ENCODE measurements at regions of chr1 and their contacts with region 1.

Region 1: GRCh38 chr1:87084244-87084836 is 169.9 kb downstream of the HS2ST1 start:
- DNase-seq: no peak
- ATAC-seq: peak; percentile 83
- H3K4me3 ChIP-seq: no peak overlapping the region
- H3K27ac ChIP-seq: no peak overlapping the region; the same call in 1 of the 2 replicates
- H3K4me1 ChIP-seq: peaks cover 3% of the 10 kb centered on the region; the same call in 1 of the 2 replicates
- H3K27me3 ChIP-seq: no peaks in the 10 kb centered on the region
- CTCF ChIP-seq: peak in 2 of 3 experiments; percentile 27 to 34; a peak in 2 of 6 replicates
- EP300 ChIP-seq: no peak
- POLR2A ChIP-seq: no peak
- RAD21 ChIP-seq: peak; percentile 66

Region 2: DNA sequence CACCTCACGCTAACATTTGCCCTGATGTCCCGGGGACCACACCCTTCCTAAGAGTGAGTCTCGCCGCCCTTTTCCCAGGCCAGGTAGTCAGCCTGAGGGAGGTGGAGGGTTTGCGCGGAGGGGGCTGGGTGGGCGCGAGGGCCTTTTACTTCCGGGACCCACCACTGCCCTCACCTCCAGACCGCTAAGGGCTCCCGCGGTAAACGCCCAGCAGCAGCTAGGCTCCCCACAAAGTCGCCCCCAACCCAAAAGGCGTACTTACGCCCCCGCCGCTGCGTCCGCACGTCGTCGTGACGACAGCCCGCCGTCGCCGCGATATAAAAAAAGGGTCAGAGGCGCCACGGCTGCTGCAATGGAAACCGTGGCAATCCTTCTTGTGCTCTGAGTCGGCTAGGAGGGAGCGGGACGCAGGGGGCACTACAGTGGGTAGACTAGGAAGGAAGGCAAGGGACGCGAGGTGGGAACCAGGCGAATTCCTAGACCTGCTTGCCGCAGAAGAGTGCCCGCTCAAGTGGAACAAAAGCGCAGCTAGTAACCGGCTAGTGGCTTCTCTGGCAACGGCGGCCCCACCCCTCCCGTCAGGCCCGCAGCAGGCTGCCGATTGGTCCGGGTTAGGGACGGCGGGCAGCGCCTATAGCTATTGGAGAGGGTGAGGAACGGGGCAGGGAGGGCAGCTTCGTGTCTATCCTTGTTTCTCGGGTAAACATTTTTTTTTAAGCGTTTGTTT is 688.4 kb before region 1 on chr1 and contains the start of gene ODF2L:
- CTCF ChIA-PET with region 1: no interaction called
- POLR2A ChIA-PET with region 1: no interaction called
- RAD21 ChIA-PET with region 1: no interaction called
- SMC1A ChIA-PET with region 1: no interaction called
- in situ Hi-C with region 1: loop called (anchors 25 kb)
- intact Hi-C with region 1: no loop called
- DNase-seq: peak; percentile 46
- ATAC-seq: peak; percentile 100
- H3K4me3 ChIP-seq: peak within 1 kb of the TSS; percentile 96
- H3K27ac ChIP-seq: peak within 1 kb of the TSS; percentile 54
- H3K4me1 ChIP-seq: no peaks in the 10 kb centered on the region
- H3K27me3 ChIP-seq: no peaks in the 10 kb centered on the region
- CTCF ChIP-seq: no peak
- EP300 ChIP-seq: no peak
- POLR2A ChIP-seq: peak; percentile 57; the same call in 1 of the 2 replicates
- RAD21 ChIP-seq: no peak
- polyA plus RNA-seq, gene ODF2L: 20.0 to 25.9 TPM

Region 3: GRCh38 chr1:86704458-86704971 is 379.8 kb before region 1 on chr1 and contains the start of gene SH3GLB1:
- CTCF ChIA-PET with region 1: interaction called, 20 read pairs
- POLR2A ChIA-PET with region 1: interaction called, 3 read pairs
- RAD21 ChIA-PET with region 1: interaction called, 12 read pairs
- SMC1A ChIA-PET with region 1: interaction called, 7 read pairs
- in situ Hi-C with region 1: no loop called
- intact Hi-C with region 1: loop called (anchors 10 kb)
- DNase-seq: peak; percentile 61
- ATAC-seq: peak; percentile 92
- H3K4me3 ChIP-seq: peak within 1 kb of the TSS; percentile 93
- H3K27ac ChIP-seq: peak within 1 kb of the TSS; percentile 94
- H3K4me1 ChIP-seq: no peaks in the 10 kb centered on the region
- H3K27me3 ChIP-seq: no peaks in the 10 kb centered on the region
- CTCF ChIP-seq: peak; percentile 83 to 90 (median 84)
- EP300 ChIP-seq: no peak; a peak in 1 of 4 replicates
- POLR2A ChIP-seq: peak; percentile 90
- RAD21 ChIP-seq: peak; percentile 49
- polyA plus RNA-seq, gene SH3GLB1: 19.8 to 20.2 TPM

Region 4: DNA sequence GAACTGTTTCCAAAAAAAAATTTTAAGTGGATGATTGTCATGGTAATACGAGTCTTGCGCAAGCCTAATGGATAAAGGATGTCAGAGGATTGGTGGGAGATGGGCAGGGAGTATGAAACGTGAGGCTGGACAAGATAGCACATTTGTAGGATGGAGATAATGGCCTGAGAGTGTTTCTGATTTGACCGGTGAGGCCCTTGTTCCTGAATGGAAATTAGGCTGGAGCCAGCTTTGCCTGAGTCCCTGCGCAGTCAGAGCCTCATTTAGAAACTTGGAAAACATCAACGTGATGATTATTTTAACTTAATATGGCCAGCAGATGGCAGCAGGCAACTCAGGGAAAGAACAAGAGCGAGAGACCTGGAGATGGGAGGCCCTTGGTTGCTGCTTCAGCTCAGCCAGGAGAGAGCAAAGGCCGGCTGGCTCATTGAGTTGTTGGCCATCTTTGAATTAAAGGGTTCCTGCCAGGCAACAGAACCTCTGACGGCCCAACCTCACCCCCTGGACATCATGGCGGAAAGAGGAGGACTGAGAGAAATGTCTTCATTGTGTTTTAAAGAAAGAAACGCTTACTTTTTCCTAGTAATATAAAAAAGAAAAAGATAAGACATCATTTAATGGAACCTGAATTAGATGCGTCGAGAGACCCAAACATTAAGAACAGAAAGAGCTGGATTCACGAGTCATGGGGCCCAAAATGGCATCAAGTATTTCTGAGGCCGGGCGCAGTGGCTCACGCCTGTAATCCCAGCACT is 250.7 kb before region 1 on chr1:
- CTCF ChIA-PET with region 1: interaction called, 198 read pairs
- POLR2A ChIA-PET with region 1: interaction called, 5 read pairs
- RAD21 ChIA-PET with region 1: interaction called, 76 read pairs
- SMC1A ChIA-PET with region 1: interaction called, 101 read pairs
- in situ Hi-C with region 1: loop called (anchors 5 kb)
- intact Hi-C with region 1: loop called (anchors 1 kb)
- DNase-seq: peak; percentile 41
- ATAC-seq: peak; percentile 96
- H3K4me3 ChIP-seq: no peak overlapping the region
- H3K27ac ChIP-seq: no peak overlapping the region
- H3K4me1 ChIP-seq: no peaks in the 10 kb centered on the region
- H3K27me3 ChIP-seq: no peaks in the 10 kb centered on the region
- CTCF ChIP-seq: peak; percentile 40 to 79 (median 49); a peak in 5 of 6 replicates
- EP300 ChIP-seq: no peak
- POLR2A ChIP-seq: no peak
- RAD21 ChIP-seq: peak; percentile 93

Region 5: DNA sequence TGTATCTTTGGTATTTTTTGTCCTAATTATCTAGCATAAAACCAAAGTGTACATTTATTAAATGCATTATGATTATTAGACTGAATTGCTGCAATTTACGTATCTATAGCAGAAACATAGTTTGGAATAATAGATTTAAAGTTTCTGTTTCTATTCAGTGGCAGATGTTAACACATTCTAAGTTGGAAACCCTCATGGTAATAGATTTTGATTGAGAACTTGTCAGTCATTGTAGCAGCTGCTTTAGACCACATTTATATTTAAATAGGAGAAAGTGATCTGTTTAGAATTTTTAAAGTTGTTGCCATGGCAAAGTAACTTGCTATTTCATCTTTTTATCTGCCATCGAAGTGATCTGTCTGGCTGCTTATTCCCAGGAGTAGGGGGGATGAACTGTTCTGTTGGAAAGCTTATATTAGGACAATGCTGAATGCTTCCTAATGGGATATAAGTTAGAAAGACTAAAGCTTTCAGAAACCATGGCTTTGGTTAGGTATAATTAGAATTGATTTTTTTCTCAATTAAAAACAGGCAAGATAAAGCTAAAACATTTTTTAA is 108.3 kb before region 1 on chr1:
- CTCF ChIA-PET with region 1: interaction called, 45 read pairs
- POLR2A ChIA-PET with region 1: no interaction called
- RAD21 ChIA-PET with region 1: interaction called, 9 read pairs
- SMC1A ChIA-PET with region 1: interaction called, 5 read pairs
- in situ Hi-C with region 1: no loop called
- intact Hi-C with region 1: no loop called
- DNase-seq: no peak
- ATAC-seq: no peak
- H3K4me3 ChIP-seq: no peak overlapping the region
- H3K27ac ChIP-seq: no peak overlapping the region
- H3K4me1 ChIP-seq: no peaks in the 10 kb centered on the region
- H3K27me3 ChIP-seq: no peaks in the 10 kb centered on the region
- CTCF ChIP-seq: no peak
- EP300 ChIP-seq: no peak
- POLR2A ChIP-seq: no peak
- RAD21 ChIP-seq: no peak

Region 6: GRCh38 chr1:87030740-87031690 is 53.3 kb before region 1 on chr1:
- CTCF ChIA-PET with region 1: interaction called, 4 read pairs
- POLR2A ChIA-PET with region 1: no interaction called
- RAD21 ChIA-PET with region 1: interaction called, 3 read pairs
- SMC1A ChIA-PET with region 1: interaction called, 17 read pairs
- in situ Hi-C with region 1: no loop called
- intact Hi-C with region 1: loop called (anchors 5 kb)
- DNase-seq: no peak
- ATAC-seq: peak; percentile 91
- H3K4me3 ChIP-seq: no peak overlapping the region
- H3K27ac ChIP-seq: no peak overlapping the region
- H3K4me1 ChIP-seq: no peaks in the 10 kb centered on the region
- H3K27me3 ChIP-seq: no peaks in the 10 kb centered on the region
- CTCF ChIP-seq: no peak
- EP300 ChIP-seq: no peak
- POLR2A ChIP-seq: no peak
- RAD21 ChIP-seq: no peak

Region 7: DNA sequence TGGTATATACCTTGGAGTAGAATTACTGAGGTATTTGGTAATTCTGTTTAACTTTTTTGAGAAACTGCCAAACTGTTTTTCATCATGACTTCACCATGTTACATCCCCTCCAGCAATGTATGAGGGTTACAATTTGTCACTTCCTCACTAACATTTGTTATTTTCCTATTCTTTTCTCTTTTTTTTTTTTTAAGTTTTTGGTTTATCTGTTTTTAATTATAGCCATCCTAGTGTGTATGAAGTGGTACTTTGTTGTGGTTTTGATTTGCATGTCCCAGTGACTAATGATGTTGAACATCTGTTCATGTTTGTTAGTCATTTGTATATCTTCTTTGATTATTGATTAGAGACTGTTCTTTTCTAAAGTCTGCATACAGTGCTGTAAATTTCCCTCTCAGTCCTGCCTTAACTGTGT is 22.6 kb before region 1 on chr1:
- CTCF ChIA-PET with region 1: interaction called, 36 read pairs
- POLR2A ChIA-PET with region 1: interaction called, 7 read pairs
- RAD21 ChIA-PET with region 1: interaction called, 43 read pairs
- SMC1A ChIA-PET with region 1: interaction called, 48 read pairs
- in situ Hi-C with region 1: no loop called
- intact Hi-C with region 1: no loop called
- DNase-seq: peak; percentile 66
- ATAC-seq: peak; percentile 58
- H3K4me3 ChIP-seq: no peak overlapping the region
- H3K27ac ChIP-seq: peak overlapping the region; percentile 5
- H3K4me1 ChIP-seq: peaks cover 30% of the 10 kb centered on the region
- H3K27me3 ChIP-seq: no peaks in the 10 kb centered on the region
- CTCF ChIP-seq: no peak
- EP300 ChIP-seq: 0 out of 4 replicates have a peak, but pooled peaks of 1 of the 2 experiments have one; percentile 40
- POLR2A ChIP-seq: no peak
- RAD21 ChIP-seq: no peak

Measured in GM12878 (cell line).